ENCODE measurements at regions of chr18 and their contacts with region 1.

Region 1: GRCh38 chr18:35267161-35267651 is 22.8 kb downstream of the ZSCAN30 start:
- DNase-seq: peak; percentile 80 to 84
- H3K4me3 ChIP-seq: peak overlapping the region; percentile 53
- H3K4me3 Mint-ChIP-seq: peak overlapping the region; percentile 94
- H3K27ac Mint-ChIP-seq: peak overlapping the region; percentile 98
- H3K4me1 ChIP-seq: no peaks in the 10 kb centered on the region
- H3K4me1 Mint-ChIP-seq: peaks cover 14% of the 10 kb centered on the region
- H3K27me3 ChIP-seq: no peaks in the 10 kb centered on the region
- H3K27me3 Mint-ChIP-seq: no peaks in the 10 kb centered on the region
- CTCF ChIP-seq: no peak

Region 2: DNA sequence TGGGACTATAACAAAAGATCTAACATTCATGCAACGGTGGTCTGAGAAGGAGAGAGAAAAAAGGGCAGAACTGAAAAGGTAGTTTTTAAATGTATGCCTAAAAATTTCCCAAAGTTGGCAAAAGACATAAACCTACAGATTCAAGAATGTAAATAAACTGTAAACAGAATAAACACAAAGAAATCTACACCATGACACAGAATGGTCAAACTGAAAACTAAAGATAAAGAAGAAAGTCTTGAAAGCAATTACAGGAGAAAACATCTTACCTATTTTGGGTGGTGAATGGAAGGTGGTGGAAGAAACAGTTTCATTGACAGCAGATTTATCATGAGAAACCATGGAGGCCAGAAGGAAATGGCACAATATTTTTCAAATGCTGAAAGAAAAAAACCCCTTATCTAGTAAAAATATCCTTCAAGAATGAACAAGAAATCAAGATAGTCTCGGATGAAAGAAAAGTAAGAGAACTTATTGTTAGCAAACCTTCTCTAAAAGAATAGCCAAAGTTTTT is 62.0 kb before region 1 on chr18:
- CTCF ChIA-PET with region 1: no interaction called
- POLR2A ChIA-PET with region 1: no interaction called
- intact Hi-C with region 1: no loop called
- DNase-seq: no peak
- H3K4me3 ChIP-seq: no peak overlapping the region
- H3K4me3 Mint-ChIP-seq: no peak overlapping the region
- H3K27ac Mint-ChIP-seq: no peak overlapping the region
- H3K4me1 ChIP-seq: no peaks in the 10 kb centered on the region
- H3K4me1 Mint-ChIP-seq: no peaks in the 10 kb centered on the region
- H3K27me3 ChIP-seq: no peaks in the 10 kb centered on the region
- H3K27me3 Mint-ChIP-seq: no peaks in the 10 kb centered on the region
- CTCF ChIP-seq: no peak

Region 3: GRCh38 chr18:35231052-35231451 is 36.2 kb before region 1 on chr18:
- CTCF ChIA-PET with region 1: no interaction called
- POLR2A ChIA-PET with region 1: no interaction called
- intact Hi-C with region 1: loop called (anchors 1 kb)
- DNase-seq: peak; percentile 69 to 70
- H3K4me3 ChIP-seq: no peak overlapping the region
- H3K4me3 Mint-ChIP-seq: peak overlapping the region; percentile 60
- H3K27ac Mint-ChIP-seq: no peak overlapping the region
- H3K4me1 ChIP-seq: no peaks in the 10 kb centered on the region
- H3K4me1 Mint-ChIP-seq: no peaks in the 10 kb centered on the region
- H3K27me3 ChIP-seq: no peaks in the 10 kb centered on the region
- H3K27me3 Mint-ChIP-seq: peaks cover 2% of the 10 kb centered on the region
- CTCF ChIP-seq: peak; percentile 51 to 68

Region 4: DNA sequence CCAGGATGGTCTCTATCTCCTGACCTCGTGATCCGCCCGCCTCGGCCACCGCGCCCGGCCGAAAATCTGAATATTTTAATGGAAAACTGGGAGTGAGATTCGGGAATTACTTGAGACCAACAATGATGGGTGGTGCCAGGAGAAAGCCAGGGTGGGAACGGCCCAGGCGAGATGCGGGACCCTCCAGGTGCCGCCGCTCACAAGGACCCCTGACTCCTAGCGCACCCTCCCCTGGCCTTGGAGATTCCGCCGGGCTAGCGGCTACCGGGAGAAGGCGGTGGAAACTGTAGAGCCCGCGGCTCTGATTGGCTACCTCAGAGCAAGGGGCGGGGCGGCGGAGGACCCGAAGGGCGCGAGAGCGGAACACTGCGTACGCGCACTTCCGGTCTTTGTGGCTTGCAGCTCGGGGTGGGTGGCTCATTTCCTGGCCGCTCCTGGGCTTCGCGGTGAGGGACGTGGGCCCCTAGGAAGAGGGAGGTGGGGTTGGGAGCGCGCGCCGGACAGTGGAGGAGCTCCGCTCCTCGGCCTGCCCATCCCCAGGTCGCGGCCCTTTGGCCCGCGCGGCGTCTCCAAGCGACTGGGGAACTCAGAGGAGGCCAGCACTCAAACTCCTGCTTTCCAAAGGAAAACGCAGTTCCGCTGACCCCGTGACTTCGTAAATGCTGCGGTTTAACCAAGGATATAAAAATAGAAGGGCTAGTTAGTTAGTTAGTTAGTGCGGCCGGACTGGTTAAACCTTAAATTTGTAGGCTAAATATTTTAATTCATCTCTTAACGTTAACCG is 26.4 kb before region 1 on chr18 and contains the start of gene ZNF397:
- CTCF ChIA-PET with region 1: no interaction called
- POLR2A ChIA-PET with region 1: interaction called, 6 read pairs
- intact Hi-C with region 1: loop called (anchors 1 kb)
- DNase-seq: peak; percentile 92 to 94
- H3K4me3 ChIP-seq: peak within 1 kb of the TSS; percentile 68
- H3K4me3 Mint-ChIP-seq: peak within 1 kb of the TSS; percentile 80
- H3K27ac Mint-ChIP-seq: peak within 1 kb of the TSS; percentile 94
- H3K4me1 ChIP-seq: no peaks in the 10 kb centered on the region
- H3K4me1 Mint-ChIP-seq: no peaks in the 10 kb centered on the region
- H3K27me3 ChIP-seq: no peaks in the 10 kb centered on the region
- H3K27me3 Mint-ChIP-seq: no peaks in the 10 kb centered on the region
- CTCF ChIP-seq: no peak
- total RNA-seq, gene ZNF397: 4.9 and 6.0 TPM in 2 replicates

Region 5: GRCh38 chr18:35290073-35290735 is 23.0 kb after region 1 on chr18 and contains the start of gene ZSCAN30:
- CTCF ChIA-PET with region 1: interaction called, 7 read pairs
- POLR2A ChIA-PET with region 1: interaction called, 23 read pairs
- intact Hi-C with region 1: loop called (anchors 2 kb)
- DNase-seq: peak; percentile 91 to 92
- H3K4me3 ChIP-seq: peak within 1 kb of the TSS; percentile 47
- H3K4me3 Mint-ChIP-seq: peak within 1 kb of the TSS; percentile 95
- H3K27ac Mint-ChIP-seq: peak within 1 kb of the TSS; percentile 97
- H3K4me1 ChIP-seq: no peaks in the 10 kb centered on the region
- H3K4me1 Mint-ChIP-seq: peaks cover 6% of the 10 kb centered on the region
- H3K27me3 ChIP-seq: no peaks in the 10 kb centered on the region
- H3K27me3 Mint-ChIP-seq: no peaks in the 10 kb centered on the region
- CTCF ChIP-seq: no peak
- total RNA-seq, gene ZSCAN30: 11.9 and 14.1 TPM in 2 replicates

Region 6: DNA sequence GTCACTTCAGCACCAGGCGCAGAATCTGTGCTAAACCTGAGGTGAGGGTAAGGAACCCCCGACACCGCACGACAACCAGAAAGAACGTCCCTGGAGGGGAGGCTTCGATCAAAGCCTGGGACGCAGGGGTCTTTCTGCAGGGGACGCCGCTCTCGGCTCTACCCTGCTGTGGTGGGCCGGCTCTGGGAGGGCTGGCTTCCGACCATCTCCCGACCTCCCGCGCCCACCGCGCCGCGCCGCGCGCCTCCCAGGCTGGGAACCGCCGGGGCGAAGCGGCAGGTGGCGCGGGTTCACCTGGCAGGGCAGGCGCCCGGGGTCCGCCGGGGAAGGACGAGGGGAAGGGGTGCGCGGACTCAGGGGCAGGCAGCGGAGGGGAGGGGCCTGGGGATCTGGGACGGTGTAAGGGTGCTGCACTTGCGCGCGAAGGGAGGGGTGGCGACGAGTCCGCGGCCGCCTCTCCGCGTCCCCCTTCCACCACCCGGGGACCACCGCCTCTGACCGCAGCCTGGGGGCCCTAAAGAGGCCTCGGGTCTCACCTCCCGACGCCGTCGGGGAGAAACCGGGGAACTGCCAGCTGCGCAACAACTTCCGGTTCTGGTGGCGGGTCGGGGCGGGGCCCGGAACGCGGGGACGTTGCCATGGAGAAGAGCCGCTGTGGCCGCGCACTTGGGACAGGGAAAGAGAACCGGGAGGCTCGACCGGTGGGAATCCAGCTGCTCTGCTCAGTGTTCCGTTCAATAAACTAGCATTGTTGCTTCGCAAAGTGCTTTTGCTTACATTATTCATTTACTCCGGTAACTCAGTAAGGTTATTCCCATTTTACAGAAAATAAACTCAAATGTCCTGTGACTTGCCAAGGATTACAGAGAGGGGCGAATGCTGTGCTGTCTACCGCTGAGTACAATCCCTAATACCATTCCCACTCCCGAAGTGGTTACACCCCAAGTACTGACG is 109.8 kb after region 1 on chr18 and contains the start of gene ZNF396:
- CTCF ChIA-PET with region 1: no interaction called
- POLR2A ChIA-PET with region 1: no interaction called
- intact Hi-C with region 1: no loop called
- DNase-seq: peak; percentile 47 to 71
- H3K4me3 ChIP-seq: peak within 1 kb of the TSS; percentile 64
- H3K4me3 Mint-ChIP-seq: peak within 1 kb of the TSS; percentile 73
- H3K27ac Mint-ChIP-seq: no peak within 1 kb of the TSS
- H3K4me1 ChIP-seq: no peaks in the 10 kb centered on the region
- H3K4me1 Mint-ChIP-seq: no peaks in the 10 kb centered on the region
- H3K27me3 ChIP-seq: no peaks in the 10 kb centered on the region
- H3K27me3 Mint-ChIP-seq: peaks cover 8% of the 10 kb centered on the region
- CTCF ChIP-seq: no peak
- total RNA-seq, gene ZNF396: 0.35 and 0.61 TPM in 2 replicates